Lower lobe of right lung (tissue), 2 donors: ENCODE measurements at regions of chr1 and their contacts with region 1.

Region 1: GRCh38 chr1:99481391-99481996 is 164.4 kb upstream of the PALMD start:
- DNase-seq: no peak
- ATAC-seq: peak; percentile 43 to 75
- H3K4me3 ChIP-seq: no peak overlapping the region
- H3K27ac ChIP-seq: no peak overlapping the region
- H3K4me1 ChIP-seq: no peaks in the 10 kb centered on the region
- H3K27me3 ChIP-seq: no peaks in the 10 kb centered on the region
- CTCF ChIP-seq: peak; percentile 76

Region 2: DNA sequence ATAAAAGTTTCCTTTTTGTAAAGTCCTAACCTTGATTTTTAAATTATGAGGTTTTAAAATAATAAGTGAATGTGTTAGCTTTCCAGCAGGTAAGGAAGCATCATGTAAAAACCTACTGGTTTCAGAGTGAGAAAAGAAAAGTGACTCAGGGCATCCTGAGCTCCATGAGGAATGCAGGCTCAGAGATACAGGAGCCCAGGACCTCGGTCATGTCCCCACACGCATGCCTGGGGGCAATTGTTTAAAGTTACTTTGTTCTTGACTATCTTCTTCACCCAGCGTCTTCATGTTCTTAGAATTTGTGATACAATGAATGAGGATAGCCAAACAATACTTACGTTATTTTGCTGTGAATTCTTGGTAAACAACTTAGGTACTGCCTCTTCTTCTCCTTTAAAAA is 359.5 kb before region 1 on chr1:
- intact Hi-C with region 1: no loop called
- DNase-seq: no peak
- ATAC-seq: no peak
- H3K4me3 ChIP-seq: no peak overlapping the region
- H3K27ac ChIP-seq: no peak overlapping the region
- H3K4me1 ChIP-seq: no peaks in the 10 kb centered on the region
- H3K27me3 ChIP-seq: no peaks in the 10 kb centered on the region
- CTCF ChIP-seq: no peak

Region 3: GRCh38 chr1:99180343-99180808 is 301.1 kb before region 1 on chr1:
- intact Hi-C with region 1: loop called (anchors 5 kb)
- DNase-seq: no peak
- ATAC-seq: peak; percentile 83 to 95
- H3K4me3 ChIP-seq: no peak overlapping the region
- H3K27ac ChIP-seq: no peak overlapping the region
- H3K4me1 ChIP-seq: no peaks in the 10 kb centered on the region
- H3K27me3 ChIP-seq: no peaks in the 10 kb centered on the region
- CTCF ChIP-seq: peak; percentile 74

Region 4: DNA sequence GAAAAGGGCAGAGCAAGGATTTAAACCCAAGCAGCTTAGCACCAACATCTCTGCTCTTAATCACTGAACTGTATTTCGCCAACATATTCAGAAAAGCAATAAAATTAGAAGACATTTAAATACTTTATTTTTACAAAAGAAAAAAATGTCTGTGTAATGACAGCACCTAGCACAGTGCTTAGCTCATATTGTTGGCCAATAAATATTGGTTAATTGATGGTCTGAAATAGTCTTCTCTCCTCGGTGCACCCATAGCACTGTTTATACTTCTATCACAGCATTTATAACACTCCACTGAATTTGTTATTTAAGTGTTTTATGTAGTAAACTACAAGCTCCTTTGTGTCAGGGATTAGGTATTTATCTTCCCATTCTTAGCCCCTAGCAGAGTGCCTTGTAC is 288.1 kb before region 1 on chr1:
- intact Hi-C with region 1: no loop called
- DNase-seq: no peak
- ATAC-seq: no peak
- H3K4me3 ChIP-seq: no peak overlapping the region
- H3K27ac ChIP-seq: no peak overlapping the region
- H3K4me1 ChIP-seq: no peaks in the 10 kb centered on the region
- H3K27me3 ChIP-seq: no peaks in the 10 kb centered on the region
- CTCF ChIP-seq: no peak

Region 5: DNA sequence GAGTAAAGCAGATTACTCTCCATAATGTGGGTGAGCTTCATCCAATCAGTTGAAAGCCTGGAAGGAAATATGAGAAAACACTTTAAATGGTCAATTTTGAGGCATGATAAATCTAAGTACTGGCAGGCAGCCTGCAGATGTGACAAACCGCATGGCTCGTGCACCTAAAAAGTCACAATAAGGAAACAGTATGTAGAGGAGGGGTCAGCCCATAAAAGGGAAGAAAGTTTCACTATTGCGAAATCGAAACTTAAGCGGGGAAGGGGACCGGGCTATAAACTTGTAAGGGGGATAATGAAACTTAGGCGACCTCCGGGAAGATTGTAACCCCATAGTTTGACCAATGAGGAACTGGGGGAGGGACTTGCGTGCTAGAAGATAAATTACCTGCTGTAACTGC is 107.4 kb before region 1 on chr1:
- intact Hi-C with region 1: no loop called
- DNase-seq: no peak
- ATAC-seq: no peak
- H3K4me3 ChIP-seq: no peak overlapping the region
- H3K27ac ChIP-seq: no peak overlapping the region
- H3K4me1 ChIP-seq: no peaks in the 10 kb centered on the region
- H3K27me3 ChIP-seq: no peaks in the 10 kb centered on the region
- CTCF ChIP-seq: no peak

Region 6: GRCh38 chr1:99650773-99651437 is 169.4 kb after region 1 on chr1:
- intact Hi-C with region 1: no loop called
- DNase-seq: no peak
- ATAC-seq: no peak
- H3K4me3 ChIP-seq: no peak overlapping the region
- H3K27ac ChIP-seq: peak overlapping the region; percentile 8
- H3K4me1 ChIP-seq: no peaks in the 10 kb centered on the region
- H3K27me3 ChIP-seq: no peaks in the 10 kb centered on the region
- CTCF ChIP-seq: no peak